ENCODE measurements at regions of chr3 and their contacts with region 1.

Region 1: GRCh38 chr3:170357176-170357919 is at the start of gene SKIL:
- DNase-seq: peak; percentile 97
- H3K4me3 Mint-ChIP-seq: peak within 1 kb of the TSS; percentile 96
- H3K27ac Mint-ChIP-seq: peak within 1 kb of the TSS; percentile 95
- H3K4me1 Mint-ChIP-seq: peaks cover 32% of the 10 kb centered on the region
- H3K27me3 Mint-ChIP-seq: no peaks in the 10 kb centered on the region
- total RNA-seq, gene SKIL: 16.3 to 17.5 TPM

Region 2: DNA sequence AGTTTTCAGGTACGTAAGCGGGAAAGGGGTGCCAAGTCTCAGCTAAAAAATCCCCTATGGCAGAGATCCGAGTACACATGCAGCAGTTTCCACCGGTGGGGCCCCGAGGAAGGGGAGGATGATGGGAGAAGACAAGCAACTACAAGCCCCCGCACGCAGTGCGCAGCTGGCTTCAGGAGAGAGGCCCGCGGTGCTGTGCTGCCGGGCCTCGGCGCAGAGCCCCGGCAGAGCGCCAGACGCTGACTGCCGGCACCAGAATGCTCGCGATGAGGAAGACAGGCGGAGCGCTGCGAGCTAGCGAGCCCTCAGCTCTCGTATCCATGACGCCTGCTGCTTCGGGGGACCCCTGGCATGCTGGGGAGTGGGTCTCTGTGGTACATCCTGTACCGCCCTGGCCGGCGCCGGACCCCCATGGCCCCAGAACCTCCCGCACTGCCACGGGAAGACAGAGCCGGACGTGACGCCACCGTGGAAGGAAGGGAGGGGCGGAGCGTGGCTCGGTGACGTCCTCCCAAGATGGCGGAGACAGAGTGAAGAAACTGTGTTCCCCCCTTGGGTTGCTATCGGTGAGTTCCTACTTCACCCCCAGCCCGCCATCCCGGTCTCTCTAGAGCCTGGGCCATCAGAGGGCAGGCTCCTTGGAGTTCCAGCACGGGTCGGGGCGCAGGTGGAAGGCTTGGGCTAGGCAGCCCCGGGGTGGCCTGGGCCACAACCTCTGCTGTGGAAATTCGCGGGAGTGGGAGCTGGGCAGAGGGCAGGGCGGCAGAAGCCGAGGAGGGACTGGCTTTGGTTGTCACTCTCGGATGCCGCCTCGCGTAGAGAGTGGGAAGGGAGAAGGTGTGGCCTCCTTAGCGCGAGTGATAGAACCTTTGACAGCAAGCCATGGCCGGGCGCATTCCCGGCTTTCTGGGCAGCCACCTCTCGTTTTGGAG is 584.2 kb before region 1 on chr3 and contains the start of gene MYNN:
- CTCF ChIA-PET with region 1: no interaction called
- intact Hi-C with region 1: loop called (anchors 1 kb)
- DNase-seq: peak; percentile 94
- H3K4me3 Mint-ChIP-seq: peak within 1 kb of the TSS; percentile 94
- H3K27ac Mint-ChIP-seq: peak within 1 kb of the TSS; percentile 97
- H3K4me1 Mint-ChIP-seq: peaks cover 36% of the 10 kb centered on the region
- H3K27me3 Mint-ChIP-seq: no peaks in the 10 kb centered on the region
- total RNA-seq, gene MYNN: 12.0 to 13.5 TPM

Region 3: GRCh38 chr3:170037463-170038433 is 319.6 kb before region 1 on chr3 and contains the start of gene GPR160:
- CTCF ChIA-PET with region 1: no interaction called
- intact Hi-C with region 1: loop called (anchors 2 kb)
- DNase-seq: peak; percentile 89
- H3K4me3 Mint-ChIP-seq: peak within 1 kb of the TSS; percentile 84
- H3K27ac Mint-ChIP-seq: no peak within 1 kb of the TSS
- H3K4me1 Mint-ChIP-seq: peaks cover 24% of the 10 kb centered on the region
- H3K27me3 Mint-ChIP-seq: no peaks in the 10 kb centered on the region
- total RNA-seq, gene GPR160: 10.3 TPM

Region 4: GRCh38 chr3:170180908-170181879 is 176.2 kb before region 1 on chr3 and contains the start of gene PHC3:
- CTCF ChIA-PET with region 1: no interaction called
- intact Hi-C with region 1: loop called (anchors 1 kb)
- DNase-seq: peak; percentile 93
- H3K4me3 Mint-ChIP-seq: peak within 1 kb of the TSS; percentile 97
- H3K27ac Mint-ChIP-seq: peak within 1 kb of the TSS; percentile 100
- H3K4me1 Mint-ChIP-seq: peaks cover 23% of the 10 kb centered on the region
- H3K27me3 Mint-ChIP-seq: no peaks in the 10 kb centered on the region
- total RNA-seq, gene PHC3: 48.7 to 50.4 TPM

Region 5: GRCh38 chr3:170203457-170203856 is 153.9 kb before region 1 on chr3:
- CTCF ChIA-PET with region 1: no interaction called
- intact Hi-C with region 1: loop called (anchors 1 kb)
- DNase-seq: no peak
- H3K4me3 Mint-ChIP-seq: no peak overlapping the region
- H3K27ac Mint-ChIP-seq: peak overlapping the region; percentile 42
- H3K4me1 Mint-ChIP-seq: peaks cover 15% of the 10 kb centered on the region
- H3K27me3 Mint-ChIP-seq: peaks cover 3% of the 10 kb centered on the region

Region 6: DNA sequence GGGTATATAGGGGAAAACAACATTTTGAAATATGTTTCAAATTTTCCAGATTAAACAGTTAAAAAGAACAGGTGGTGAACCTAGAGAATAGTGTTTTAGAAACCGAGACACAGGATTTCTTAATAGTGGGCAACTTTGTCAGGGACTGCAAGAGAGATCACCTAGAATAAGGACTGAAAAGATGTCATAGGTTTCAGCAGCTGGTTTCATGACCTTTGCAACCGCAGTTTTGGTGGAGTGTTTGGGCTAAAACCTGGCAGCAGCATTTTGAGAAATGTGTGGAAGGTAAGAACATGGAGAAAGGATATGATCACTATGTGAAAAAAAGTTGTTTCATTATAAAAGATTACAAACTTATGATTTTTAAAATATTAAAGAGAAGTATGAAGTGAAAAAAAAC is 100.2 kb before region 1 on chr3:
- CTCF ChIA-PET with region 1: no interaction called
- intact Hi-C with region 1: loop called (anchors 1 kb)
- DNase-seq: peak; percentile 58
- H3K4me3 Mint-ChIP-seq: no peak overlapping the region
- H3K27ac Mint-ChIP-seq: no peak overlapping the region
- H3K4me1 Mint-ChIP-seq: peaks cover 41% of the 10 kb centered on the region
- H3K27me3 Mint-ChIP-seq: no peaks in the 10 kb centered on the region

Region 7: DNA sequence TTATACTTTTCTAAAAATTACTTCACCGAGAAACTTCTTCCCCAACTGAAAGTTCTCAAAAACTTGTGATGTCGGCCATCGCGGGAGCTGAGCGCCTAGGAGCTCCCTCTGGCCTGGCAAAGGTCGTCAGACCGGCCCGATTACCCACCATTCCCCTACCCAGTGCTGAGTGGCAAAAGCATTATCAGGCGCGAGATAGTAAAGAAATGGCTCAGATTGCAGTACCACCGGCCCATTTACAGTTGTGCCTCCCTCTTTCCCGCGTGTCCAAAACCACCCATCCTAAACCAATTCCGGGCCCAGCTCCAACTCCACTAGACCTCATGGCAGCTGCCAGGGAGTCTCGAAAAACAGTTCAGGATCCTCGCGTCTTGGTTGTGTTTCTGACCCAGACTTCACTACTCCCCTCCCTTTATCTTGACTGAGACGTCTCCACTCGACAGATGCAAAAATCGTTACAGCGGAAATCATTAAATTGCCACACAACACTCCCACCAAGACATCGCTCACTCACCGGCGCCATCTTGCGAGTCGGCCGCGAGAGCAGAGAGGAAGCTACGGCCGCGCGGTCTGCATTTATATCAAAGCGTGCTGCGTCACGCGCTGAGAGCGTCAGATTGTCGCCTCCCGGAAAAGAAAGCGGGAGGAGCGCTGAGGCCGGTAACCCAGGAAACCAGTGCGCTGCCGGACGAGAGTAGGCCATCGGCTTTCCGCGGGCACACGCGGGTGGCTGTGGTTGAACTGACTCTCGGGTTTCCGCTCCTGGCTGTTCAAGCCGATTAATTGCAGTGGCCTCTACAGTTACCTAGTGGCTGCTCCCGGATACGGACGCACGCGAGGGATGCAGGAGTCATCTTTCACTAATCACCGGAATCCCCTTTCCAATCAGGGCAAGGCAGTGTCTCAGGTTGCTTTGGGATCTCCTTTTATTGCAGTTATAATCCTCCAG is 512.6 kb after region 1 on chr3 and contains the start of gene RPL22L1:
- CTCF ChIA-PET with region 1: no interaction called
- intact Hi-C with region 1: loop called (anchors 1 kb)
- DNase-seq: peak; percentile 95
- H3K4me3 Mint-ChIP-seq: peak within 1 kb of the TSS; percentile 94
- H3K27ac Mint-ChIP-seq: peak within 1 kb of the TSS; percentile 98
- H3K4me1 Mint-ChIP-seq: peaks cover 14% of the 10 kb centered on the region
- H3K27me3 Mint-ChIP-seq: no peaks in the 10 kb centered on the region
- total RNA-seq, gene RPL22L1: 480 to 525 TPM